ENCODE measurements at regions of chr12 and their contacts with region 1.

Region 1: DNA sequence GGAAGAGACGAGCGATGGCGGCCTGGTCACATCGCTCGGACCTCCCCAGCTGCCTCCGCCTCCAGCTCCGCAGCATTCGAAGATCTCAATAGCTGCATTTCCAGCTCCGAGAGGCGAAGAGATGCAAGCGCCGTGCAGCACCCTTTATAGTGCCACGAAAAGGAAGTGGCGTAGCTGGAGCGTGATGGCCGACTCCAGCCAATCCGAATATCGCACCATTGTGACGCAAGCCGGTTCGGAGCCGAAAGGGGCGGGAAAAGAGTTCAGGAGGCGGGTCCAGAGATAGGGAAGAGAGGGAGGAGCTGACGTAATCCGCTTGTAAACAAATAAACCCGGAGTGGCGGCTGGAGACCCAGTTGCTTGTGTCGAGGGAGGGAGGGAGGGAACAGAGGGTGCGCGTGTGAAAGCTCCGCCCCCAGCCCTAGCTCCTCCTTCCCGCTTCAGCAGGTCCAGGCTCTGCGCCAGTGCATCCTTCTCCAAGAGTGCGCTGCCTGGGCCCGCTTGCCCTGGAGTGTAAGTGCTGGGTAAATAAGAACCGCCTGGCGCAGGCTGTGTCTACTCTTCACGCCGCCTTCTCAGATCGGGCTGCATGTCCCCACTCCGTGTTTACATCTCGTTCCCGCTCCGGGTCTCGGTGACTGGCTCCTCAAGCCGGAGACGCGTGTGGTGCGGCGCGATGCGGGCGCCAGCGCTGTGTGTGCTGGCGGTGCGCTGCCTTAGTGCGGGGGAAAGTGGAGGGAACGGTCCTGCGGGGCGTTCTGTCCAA is at the start of gene BTG1:
- DNase-seq: peak; percentile 100
- H3K4me3 Mint-ChIP-seq: peak within 1 kb of the TSS; percentile 89
- H3K27ac Mint-ChIP-seq: peak within 1 kb of the TSS; percentile 74
- H3K4me1 Mint-ChIP-seq: peaks cover 16% of the 10 kb centered on the region
- H3K27me3 Mint-ChIP-seq: no peaks in the 10 kb centered on the region
- CTCF ChIP-seq: no peak
- total RNA-seq, gene BTG1: 128 and 129 TPM in 2 replicates

Region 2: GRCh38 chr12:91722072-91722471 is 423.8 kb before region 1 on chr12:
- CTCF ChIA-PET with region 1: no interaction called
- POLR2A ChIA-PET with region 1: interaction called, 59 read pairs
- intact Hi-C with region 1: no loop called
- DNase-seq: peak; percentile 50
- H3K4me3 Mint-ChIP-seq: no peak overlapping the region
- H3K27ac Mint-ChIP-seq: peak overlapping the region; percentile 42
- H3K4me1 Mint-ChIP-seq: peaks cover 42% of the 10 kb centered on the region
- H3K27me3 Mint-ChIP-seq: no peaks in the 10 kb centered on the region
- CTCF ChIP-seq: no peak

Region 3: DNA sequence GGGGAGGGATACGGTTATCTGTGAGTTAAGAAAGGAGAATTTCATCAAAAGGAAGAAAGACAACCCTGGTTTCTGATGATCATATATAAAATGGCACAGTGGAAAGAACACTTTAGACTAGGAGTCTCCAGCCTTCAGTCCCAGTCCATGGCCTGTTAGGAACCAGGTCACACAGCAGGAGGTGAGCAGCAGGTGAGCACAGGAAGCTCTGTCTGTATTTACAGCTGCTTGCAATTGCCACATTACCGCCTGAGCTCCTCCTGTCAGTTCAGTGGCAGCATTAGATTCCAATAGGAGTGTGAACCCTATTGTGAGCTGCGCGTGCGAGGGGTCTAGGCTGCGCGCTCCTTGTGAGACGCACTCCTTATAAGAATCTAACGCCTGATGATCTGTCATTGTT is 138.1 kb before region 1 on chr12:
- CTCF ChIA-PET with region 1: interaction called, 3 read pairs
- POLR2A ChIA-PET with region 1: no interaction called
- intact Hi-C with region 1: loop called (anchors 2 kb)
- DNase-seq: no peak
- H3K4me3 Mint-ChIP-seq: no peak overlapping the region
- H3K27ac Mint-ChIP-seq: no peak overlapping the region
- H3K4me1 Mint-ChIP-seq: no peaks in the 10 kb centered on the region
- H3K27me3 Mint-ChIP-seq: no peaks in the 10 kb centered on the region
- CTCF ChIP-seq: peak; percentile 6

Region 4: DNA sequence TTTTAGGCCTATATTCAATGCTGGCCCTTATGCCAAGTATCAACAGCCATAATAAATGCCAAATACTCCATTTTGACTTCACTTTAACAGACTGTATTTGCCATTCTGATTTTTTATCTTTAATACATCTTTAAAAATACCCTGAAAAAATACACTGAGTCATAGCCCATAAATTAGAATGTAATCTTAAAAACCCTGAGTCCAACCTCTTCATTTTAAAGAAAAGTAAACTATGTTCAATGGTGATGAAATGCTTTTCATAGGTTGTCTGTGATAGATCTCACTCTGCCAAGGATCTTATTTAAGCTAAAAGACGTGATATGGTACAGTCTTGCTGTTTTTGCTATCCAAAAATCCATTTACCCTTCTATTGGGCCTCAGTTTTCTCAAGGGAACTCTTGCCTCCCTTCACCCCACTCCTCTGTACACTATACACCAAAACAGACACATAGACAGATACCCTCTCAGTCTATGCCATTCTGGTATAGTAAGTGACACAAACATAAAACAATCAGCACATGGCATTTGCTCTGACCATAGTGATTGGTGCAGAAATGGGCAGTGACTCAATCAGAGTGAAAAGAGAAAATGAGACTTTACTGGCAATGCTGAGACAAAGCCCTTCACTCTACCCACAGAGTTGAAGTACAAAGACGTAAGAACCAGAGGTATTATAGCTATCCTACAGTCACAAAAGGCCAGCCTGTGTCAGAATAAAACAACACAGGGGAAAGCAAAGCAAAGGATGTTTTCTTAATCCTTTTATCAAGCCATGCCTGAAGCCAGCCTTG is 49.4 kb before region 1 on chr12:
- CTCF ChIA-PET with region 1: no interaction called
- POLR2A ChIA-PET with region 1: no interaction called
- intact Hi-C with region 1: no loop called
- DNase-seq: no peak
- H3K4me3 Mint-ChIP-seq: no peak overlapping the region
- H3K27ac Mint-ChIP-seq: peak overlapping the region; percentile 61
- H3K4me1 Mint-ChIP-seq: peaks cover 13% of the 10 kb centered on the region
- H3K27me3 Mint-ChIP-seq: no peaks in the 10 kb centered on the region
- CTCF ChIP-seq: no peak

Region 5: GRCh38 chr12:92244036-92244435 is 98.1 kb after region 1 on chr12:
- CTCF ChIA-PET with region 1: interaction called, 16 read pairs
- POLR2A ChIA-PET with region 1: interaction called, 146 read pairs
- intact Hi-C with region 1: no loop called
- DNase-seq: peak; percentile 25
- H3K4me3 Mint-ChIP-seq: peak overlapping the region; percentile 8
- H3K27ac Mint-ChIP-seq: peak overlapping the region; percentile 25
- H3K4me1 Mint-ChIP-seq: peaks cover 16% of the 10 kb centered on the region
- H3K27me3 Mint-ChIP-seq: no peaks in the 10 kb centered on the region
- CTCF ChIP-seq: no peak

Region 6: GRCh38 chr12:92551853-92552397 is 406.0 kb after region 1 on chr12:
- CTCF ChIA-PET with region 1: interaction called, 6 read pairs
- POLR2A ChIA-PET with region 1: interaction called, 22 read pairs
- intact Hi-C with region 1: no loop called
- DNase-seq: peak; percentile 62
- H3K4me3 Mint-ChIP-seq: no peak overlapping the region
- H3K27ac Mint-ChIP-seq: no peak overlapping the region
- H3K4me1 Mint-ChIP-seq: no peaks in the 10 kb centered on the region
- H3K27me3 Mint-ChIP-seq: no peaks in the 10 kb centered on the region
- CTCF ChIP-seq: no peak

Region 7: DNA sequence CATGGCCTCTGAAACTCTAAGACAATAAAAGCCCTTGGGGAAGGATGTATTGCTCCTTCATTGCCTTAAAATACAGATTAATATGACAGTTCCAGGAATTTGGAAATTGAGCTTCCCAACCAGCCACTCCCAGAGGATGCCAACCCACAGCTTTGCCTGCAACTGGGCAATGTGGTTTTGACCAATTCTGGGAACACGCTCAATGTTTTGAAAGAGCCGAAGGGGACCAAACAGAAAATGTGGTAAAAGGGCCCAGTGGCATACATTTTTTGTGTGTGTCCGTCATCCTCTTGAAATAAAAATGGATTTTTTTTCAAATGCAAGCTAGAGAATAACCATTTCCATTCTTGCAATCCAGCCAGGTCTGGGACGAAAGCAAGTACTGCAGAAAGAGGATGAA is 468.6 kb after region 1 on chr12:
- CTCF ChIA-PET with region 1: no interaction called
- POLR2A ChIA-PET with region 1: interaction called, 12 read pairs
- intact Hi-C with region 1: no loop called
- DNase-seq: peak; percentile 59
- H3K4me3 Mint-ChIP-seq: no peak overlapping the region
- H3K27ac Mint-ChIP-seq: no peak overlapping the region
- H3K4me1 Mint-ChIP-seq: peaks cover 11% of the 10 kb centered on the region
- H3K27me3 Mint-ChIP-seq: no peaks in the 10 kb centered on the region
- CTCF ChIP-seq: no peak

Region 8: GRCh38 chr12:92639017-92639416 is 493.1 kb after region 1 on chr12:
- CTCF ChIA-PET with region 1: no interaction called
- POLR2A ChIA-PET with region 1: no interaction called
- intact Hi-C with region 1: no loop called
- DNase-seq: no peak
- H3K4me3 Mint-ChIP-seq: no peak overlapping the region
- H3K27ac Mint-ChIP-seq: no peak overlapping the region
- H3K4me1 Mint-ChIP-seq: peaks cover 7% of the 10 kb centered on the region
- H3K27me3 Mint-ChIP-seq: no peaks in the 10 kb centered on the region
- CTCF ChIP-seq: no peak

Measured in MCF 10A (cell line).